ENCODE measurements at regions of chr2 and their contacts with region 1.

Region 1: DNA sequence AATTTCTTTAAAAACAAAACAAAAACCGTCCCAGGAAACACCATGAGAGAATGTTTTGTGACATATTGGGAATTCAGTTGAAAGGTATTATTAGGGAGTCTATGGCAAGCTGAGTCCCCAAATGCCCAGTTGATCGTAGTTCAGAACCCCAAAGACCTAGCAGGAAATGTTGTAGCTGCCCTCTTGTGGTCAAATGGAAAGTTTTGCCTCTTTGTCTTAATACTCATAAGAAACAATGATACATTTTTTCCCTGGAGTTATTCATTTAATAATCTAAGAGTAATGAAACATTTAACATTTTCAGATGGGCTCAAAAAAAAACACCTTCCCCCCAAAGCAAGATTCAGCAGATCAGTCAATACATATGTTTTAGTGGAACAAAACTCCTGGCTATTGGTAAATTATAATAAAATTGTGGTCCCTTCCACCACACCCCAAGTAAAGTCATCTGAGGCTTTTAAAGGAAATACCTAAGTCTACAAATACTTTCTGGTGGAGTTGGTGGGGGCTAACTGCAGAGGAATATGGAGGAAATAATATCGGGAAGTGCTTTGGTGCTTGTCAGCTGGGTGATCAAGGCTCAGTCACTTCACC is 37.8 kb upstream of the EFEMP1 start:
- DNase-seq: peak; percentile 22
- CTCF ChIP-seq: peak; percentile 45

Region 2: GRCh38 chr2:55771612-55772011 is 189.8 kb before region 1 on chr2:
- CTCF ChIA-PET with region 1: interaction called, 18 read pairs
- POLR2A ChIA-PET with region 1: no interaction called
- DNase-seq: no peak
- CTCF ChIP-seq: peak; percentile 22

Region 3: GRCh38 chr2:55948176-55948921 is 13.1 kb before region 1 on chr2:
- CTCF ChIA-PET with region 1: interaction called, 32 read pairs
- POLR2A ChIA-PET with region 1: no interaction called
- DNase-seq: no peak
- CTCF ChIP-seq: no peak